ENCODE measurements at regions of chr6 and their contacts with region 1.

Region 1: GRCh38 chr6:154675602-154676088 is 57.6 kb upstream of the SCAF8 start:
- DNase-seq: peak; percentile 86
- ATAC-seq: peak; percentile 98
- H3K4me3 Mint-ChIP-seq: no peak overlapping the region
- H3K27ac Mint-ChIP-seq: no peak overlapping the region
- H3K4me1 Mint-ChIP-seq: no peaks in the 10 kb centered on the region
- H3K27me3 Mint-ChIP-seq: no peaks in the 10 kb centered on the region
- CTCF ChIP-seq: peak; percentile 89

Region 2: DNA sequence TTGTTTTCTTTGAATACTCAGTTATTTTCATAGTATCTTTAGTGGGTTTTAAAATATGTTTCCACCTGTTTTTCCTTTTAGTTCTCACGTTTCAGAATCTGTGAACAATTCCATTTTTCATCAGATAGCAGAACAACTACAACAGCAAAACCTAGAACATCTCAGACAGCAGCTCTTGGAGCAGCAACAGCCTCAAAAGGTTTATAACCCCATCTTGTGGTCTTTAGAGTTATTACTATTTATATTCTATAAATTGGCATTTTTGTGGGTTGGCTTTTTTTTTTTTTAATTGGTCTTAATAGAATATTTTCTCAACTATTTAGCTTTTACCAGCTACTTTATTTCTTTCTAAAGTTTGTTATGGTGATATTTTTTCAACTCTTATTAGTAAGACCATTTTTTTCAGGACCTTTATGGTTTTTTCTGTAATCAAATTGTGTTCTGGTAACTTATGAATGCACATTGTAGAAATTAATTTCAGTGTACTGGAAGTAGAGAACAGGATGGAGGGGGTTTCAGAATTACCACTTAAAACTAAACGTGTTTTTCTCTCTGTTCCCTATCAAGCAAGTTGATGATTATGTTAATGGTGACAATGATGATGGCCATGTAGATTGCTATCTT is 129.8 kb after region 1 on chr6:
- CTCF ChIA-PET with region 1: interaction called, 25 read pairs
- POLR2A ChIA-PET with region 1: no interaction called
- DNase-seq: no peak
- ATAC-seq: peak; percentile 26; the same call in 1 of the 2 replicates
- H3K4me3 Mint-ChIP-seq: no peak overlapping the region
- H3K27ac Mint-ChIP-seq: no peak overlapping the region
- H3K4me1 Mint-ChIP-seq: no peaks in the 10 kb centered on the region
- H3K27me3 Mint-ChIP-seq: no peaks in the 10 kb centered on the region
- CTCF ChIP-seq: no peak

Region 3: GRCh38 chr6:154916857-154917256 is 241.2 kb after region 1 on chr6:
- CTCF ChIA-PET with region 1: interaction called, 11 read pairs
- POLR2A ChIA-PET with region 1: no interaction called
- DNase-seq: no peak
- ATAC-seq: no peak
- H3K4me3 Mint-ChIP-seq: no peak overlapping the region
- H3K27ac Mint-ChIP-seq: no peak overlapping the region
- H3K4me1 Mint-ChIP-seq: peaks cover 2% of the 10 kb centered on the region
- H3K27me3 Mint-ChIP-seq: no peaks in the 10 kb centered on the region
- CTCF ChIP-seq: no peak

Region 4: GRCh38 chr6:154923199-154923869 is 247.7 kb after region 1 on chr6:
- CTCF ChIA-PET with region 1: interaction called, 11 read pairs
- POLR2A ChIA-PET with region 1: no interaction called
- DNase-seq: peak; percentile 54
- ATAC-seq: peak; percentile 57
- H3K4me3 Mint-ChIP-seq: no peak overlapping the region
- H3K27ac Mint-ChIP-seq: no peak overlapping the region
- H3K4me1 Mint-ChIP-seq: peaks cover 13% of the 10 kb centered on the region
- H3K27me3 Mint-ChIP-seq: no peaks in the 10 kb centered on the region
- CTCF ChIP-seq: no peak

Region 5: DNA sequence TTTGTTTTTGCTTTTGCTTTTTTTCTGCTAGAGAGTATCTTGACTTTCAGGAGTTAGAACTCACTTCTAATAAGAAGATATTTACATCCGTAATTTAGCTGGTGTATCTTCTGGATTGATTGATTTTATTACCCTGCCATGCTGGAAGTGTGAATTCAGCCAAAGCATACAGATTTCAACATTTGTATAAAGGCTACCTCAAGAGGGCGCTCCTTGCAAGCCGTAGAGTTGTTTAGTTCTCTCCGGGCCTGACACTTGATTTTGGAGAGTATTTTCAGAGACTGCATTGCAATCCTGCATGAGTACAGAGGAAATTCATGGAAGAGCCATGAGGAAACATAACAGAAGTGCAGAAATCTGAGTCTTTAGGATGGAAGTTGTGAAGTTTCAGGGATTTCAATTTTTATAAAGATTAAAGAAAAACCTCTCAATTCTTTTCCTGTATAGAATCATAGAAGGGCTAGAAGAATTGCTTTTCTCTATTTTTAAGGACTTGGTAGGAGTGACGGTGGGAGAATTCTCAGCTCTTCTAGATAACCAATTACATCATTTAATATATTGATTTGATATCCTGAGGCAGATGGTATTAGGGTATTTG is 252.8 kb after region 1 on chr6:
- CTCF ChIA-PET with region 1: interaction called, 11 read pairs
- POLR2A ChIA-PET with region 1: no interaction called
- DNase-seq: peak; percentile 66
- ATAC-seq: peak; percentile 55
- H3K4me3 Mint-ChIP-seq: no peak overlapping the region
- H3K27ac Mint-ChIP-seq: no peak overlapping the region
- H3K4me1 Mint-ChIP-seq: peaks cover 30% of the 10 kb centered on the region
- H3K27me3 Mint-ChIP-seq: no peaks in the 10 kb centered on the region
- CTCF ChIP-seq: peak; percentile 72; the same call in 1 of the 2 replicates

Region 6: GRCh38 chr6:155154158-155154830 is 478.6 kb after region 1 on chr6:
- CTCF ChIA-PET with region 1: no interaction called
- POLR2A ChIA-PET with region 1: no interaction called
- DNase-seq: no peak
- ATAC-seq: no peak
- H3K4me3 Mint-ChIP-seq: no peak overlapping the region
- H3K27ac Mint-ChIP-seq: no peak overlapping the region
- H3K4me1 Mint-ChIP-seq: peaks cover 37% of the 10 kb centered on the region
- H3K27me3 Mint-ChIP-seq: no peaks in the 10 kb centered on the region
- CTCF ChIP-seq: no peak

Region 7: GRCh38 chr6:155188707-155189496 is 513.3 kb after region 1 on chr6:
- CTCF ChIA-PET with region 1: no interaction called
- POLR2A ChIA-PET with region 1: no interaction called
- DNase-seq: no peak
- ATAC-seq: no peak
- H3K4me3 Mint-ChIP-seq: no peak overlapping the region
- H3K27ac Mint-ChIP-seq: no peak overlapping the region; the same call in 1 of the 2 replicates
- H3K4me1 Mint-ChIP-seq: peaks cover 29% of the 10 kb centered on the region
- H3K27me3 Mint-ChIP-seq: no peaks in the 10 kb centered on the region
- CTCF ChIP-seq: no peak

Measured in WTC11 (cell line).